PC-9 (cell line): ENCODE measurements at regions of chrX and their contacts with region 1.

Region 1: GRCh38 chrX:23742697-23743622 is at the start of gene ACOT9:
- DNase-seq: peak; percentile 93
- H3K4me3 ChIP-seq: peak within 1 kb of the TSS; percentile 84
- H3K27ac ChIP-seq: peak within 1 kb of the TSS; percentile 97
- H3K4me1 ChIP-seq: peaks cover 10% of the 10 kb centered on the region; the same call in 1 of the 2 replicates
- H3K27me3 ChIP-seq: no peaks in the 10 kb centered on the region
- CTCF ChIP-seq: no peak
- total RNA-seq, gene ACOT9: 40.6 and 47.0 TPM in 2 replicates

Region 2: GRCh38 chrX:23694606-23695005 is 48.4 kb before region 1 on chrX:
- CTCF ChIA-PET with region 1: no interaction called
- POLR2A ChIA-PET with region 1: interaction called, 4 read pairs
- intact Hi-C with region 1: loop called (anchors 2 kb)
- DNase-seq: peak; percentile 38 to 43
- H3K4me3 ChIP-seq: no peak overlapping the region
- H3K27ac ChIP-seq: no peak overlapping the region
- H3K4me1 ChIP-seq: no peaks in the 10 kb centered on the region
- H3K27me3 ChIP-seq: no peaks in the 10 kb centered on the region
- CTCF ChIP-seq: peak; percentile 49

Region 3: DNA sequence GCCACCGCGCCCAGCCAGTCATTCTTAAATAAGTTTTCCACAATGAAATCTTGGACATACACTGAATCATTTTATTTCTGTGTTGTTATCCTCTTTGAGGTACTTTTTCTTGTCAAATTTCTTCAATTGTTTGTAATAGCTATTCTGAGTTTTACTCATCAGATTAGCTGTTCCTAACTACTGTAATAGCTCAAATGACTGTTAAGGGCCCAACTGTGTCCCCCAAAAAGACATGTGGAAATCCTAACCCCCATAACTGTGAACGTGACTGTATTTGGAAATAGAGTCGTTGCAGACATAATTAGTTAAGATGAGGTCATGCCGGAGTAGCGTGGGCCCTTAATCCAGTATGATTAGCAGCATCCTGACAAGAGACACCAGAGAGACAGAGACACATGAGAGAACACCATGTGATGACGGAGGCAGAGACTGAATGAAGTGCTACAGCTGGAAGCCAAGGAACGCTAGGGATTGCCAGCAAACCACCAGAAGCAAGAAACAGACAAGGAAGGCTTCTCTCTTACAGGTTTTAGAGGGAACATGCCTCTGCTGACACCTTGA is 22.8 kb before region 1 on chrX:
- CTCF ChIA-PET with region 1: interaction called, 11 read pairs
- POLR2A ChIA-PET with region 1: no interaction called
- intact Hi-C with region 1: no loop called
- DNase-seq: no peak
- H3K4me3 ChIP-seq: no peak overlapping the region
- H3K27ac ChIP-seq: no peak overlapping the region
- H3K4me1 ChIP-seq: no peaks in the 10 kb centered on the region
- H3K27me3 ChIP-seq: no peaks in the 10 kb centered on the region
- CTCF ChIP-seq: no peak

Region 4: GRCh38 chrX:24014388-24015018 is 271.5 kb after region 1 on chrX:
- CTCF ChIA-PET with region 1: no interaction called
- POLR2A ChIA-PET with region 1: no interaction called
- intact Hi-C with region 1: no loop called
- DNase-seq: no peak
- H3K4me3 ChIP-seq: no peak overlapping the region
- H3K27ac ChIP-seq: no peak overlapping the region
- H3K4me1 ChIP-seq: no peaks in the 10 kb centered on the region
- H3K27me3 ChIP-seq: no peaks in the 10 kb centered on the region
- CTCF ChIP-seq: no peak

Region 5: DNA sequence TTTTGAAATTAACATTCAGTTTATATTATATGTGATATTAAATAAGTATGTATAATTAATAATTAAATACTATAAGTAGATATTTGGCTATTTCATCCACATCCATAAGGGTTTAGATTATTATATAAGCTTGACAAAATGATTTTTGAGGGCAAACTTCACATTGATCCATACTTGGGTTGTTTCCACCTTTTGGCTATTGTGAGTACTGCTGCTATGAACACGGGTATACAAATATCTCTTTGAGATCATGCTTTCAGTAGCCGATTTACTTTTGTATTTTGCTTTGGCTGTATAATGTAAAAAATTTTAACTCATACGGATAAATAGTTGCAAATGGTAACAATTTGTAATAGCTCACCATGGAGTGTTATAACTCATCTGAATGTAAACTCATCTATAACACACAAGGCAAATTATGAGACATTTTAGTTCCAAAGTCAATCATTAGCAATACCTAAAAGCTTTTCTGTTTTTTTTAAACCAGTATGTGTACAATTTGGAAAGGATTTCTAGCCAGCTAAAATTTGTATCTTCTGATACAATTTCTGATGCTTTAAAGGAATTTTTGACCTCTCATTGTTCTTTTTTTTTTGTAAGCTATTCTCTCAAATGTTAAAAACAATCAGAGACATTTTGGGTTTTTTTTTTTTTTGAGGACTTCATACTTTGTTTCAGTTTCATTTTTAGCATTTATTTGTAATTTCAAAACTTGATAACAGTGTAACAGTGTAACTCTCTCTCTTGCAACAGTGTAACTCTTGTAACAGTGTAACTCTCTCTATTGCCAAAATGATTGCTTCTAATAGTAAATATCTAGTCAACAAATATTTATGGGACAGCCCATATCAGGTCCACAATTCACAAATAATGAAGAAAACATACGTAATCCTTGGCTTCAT is 1324.6 kb after region 1 on chrX:
- CTCF ChIA-PET with region 1: no interaction called
- POLR2A ChIA-PET with region 1: no interaction called
- intact Hi-C with region 1: no loop called
- DNase-seq: no peak
- H3K4me3 ChIP-seq: no peak overlapping the region
- H3K27ac ChIP-seq: no peak overlapping the region
- H3K4me1 ChIP-seq: no peaks in the 10 kb centered on the region
- H3K27me3 ChIP-seq: no peaks in the 10 kb centered on the region
- CTCF ChIP-seq: no peak